ENCODE measurements at regions of chr12 and their contacts with region 1.

Region 1: GRCh38 chr12:71685914-71686665 is at the start of gene TMEM19:
- DNase-seq: peak; percentile 70 to 96 (median 92)

Region 2: DNA sequence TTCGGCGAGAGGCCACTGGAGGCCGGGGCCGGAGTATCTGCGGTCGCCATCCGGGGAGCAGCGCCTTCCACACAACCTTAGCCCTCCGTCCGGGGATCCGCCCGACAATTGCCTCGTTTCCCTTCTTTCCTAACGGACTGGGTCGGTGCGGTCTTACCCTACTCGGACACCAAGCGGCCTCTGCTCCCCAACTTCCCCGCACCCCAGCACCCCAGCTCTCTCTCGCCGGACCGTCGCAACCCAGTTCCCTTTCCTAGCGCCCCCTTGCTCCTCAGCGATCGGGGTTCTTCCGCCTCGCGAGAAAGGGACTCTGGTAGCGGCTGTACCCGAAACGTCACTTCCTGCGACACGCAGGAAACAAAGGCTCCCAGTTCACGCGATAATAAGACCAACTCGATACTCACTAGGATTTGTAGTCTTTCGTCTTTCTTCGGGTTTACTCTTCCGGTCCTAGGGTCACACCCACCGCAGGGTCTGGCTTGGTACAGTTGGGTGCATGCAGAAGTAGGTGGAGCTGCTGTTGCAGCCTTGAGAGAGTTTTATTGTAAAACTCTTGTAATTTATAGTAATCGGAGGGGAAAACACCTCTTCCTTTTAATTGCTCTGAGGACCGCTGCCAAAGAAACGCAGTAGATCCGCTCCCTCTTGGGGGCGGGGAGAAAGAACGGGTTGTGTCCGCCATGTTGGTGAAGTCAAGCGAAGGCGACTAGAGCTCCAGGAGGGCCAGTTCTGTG is 22.4 kb before region 1 on chr12 and contains the start of gene ZFC3H1:
- intact Hi-C with region 1: loop called (anchors 1 kb)
- DNase-seq: peak; percentile 93 to 99 (median 98)

Region 3: DNA sequence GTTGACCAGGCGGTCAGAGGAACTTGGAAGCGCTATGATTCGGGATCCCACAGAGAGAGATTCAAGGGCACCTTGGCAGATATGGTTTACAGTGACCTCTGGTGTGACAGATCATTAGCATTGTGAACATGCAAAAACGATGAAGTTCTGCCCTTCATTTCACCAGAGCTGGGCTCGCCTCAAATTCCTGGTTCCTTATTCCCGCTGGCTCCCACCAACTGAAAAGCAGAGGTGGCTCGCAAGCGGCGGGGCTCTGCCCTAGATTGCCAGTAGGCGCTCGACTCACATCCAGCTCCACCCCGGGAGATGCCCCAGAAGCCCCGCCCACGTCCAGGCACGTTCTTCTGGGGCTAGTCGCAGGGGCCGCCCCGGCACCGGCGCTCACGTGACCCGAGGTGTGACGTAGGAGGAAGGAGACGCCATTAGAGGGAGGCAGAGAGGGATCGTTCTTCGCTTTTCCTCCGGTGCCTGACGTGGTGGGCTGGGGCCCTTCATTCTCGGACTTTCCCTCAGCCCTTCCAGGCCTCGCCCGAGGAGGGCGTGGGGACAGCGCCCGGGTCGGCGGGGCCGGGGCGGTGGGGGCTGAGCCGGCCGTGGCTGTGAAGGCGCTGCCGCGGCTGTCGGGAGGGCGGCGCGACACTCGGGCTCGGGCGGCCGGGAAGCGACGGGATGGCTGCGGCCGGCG is 68.5 kb after region 1 on chr12 and contains the start of gene RAB21:
- intact Hi-C with region 1: loop called (anchors 5 kb)
- DNase-seq: peak; percentile 95 to 100 (median 99)

Measured in head of caudate nucleus (tissue), 42 donors.